ENCODE measurements at regions of chr3 and their contacts with region 1.

Region 1: DNA sequence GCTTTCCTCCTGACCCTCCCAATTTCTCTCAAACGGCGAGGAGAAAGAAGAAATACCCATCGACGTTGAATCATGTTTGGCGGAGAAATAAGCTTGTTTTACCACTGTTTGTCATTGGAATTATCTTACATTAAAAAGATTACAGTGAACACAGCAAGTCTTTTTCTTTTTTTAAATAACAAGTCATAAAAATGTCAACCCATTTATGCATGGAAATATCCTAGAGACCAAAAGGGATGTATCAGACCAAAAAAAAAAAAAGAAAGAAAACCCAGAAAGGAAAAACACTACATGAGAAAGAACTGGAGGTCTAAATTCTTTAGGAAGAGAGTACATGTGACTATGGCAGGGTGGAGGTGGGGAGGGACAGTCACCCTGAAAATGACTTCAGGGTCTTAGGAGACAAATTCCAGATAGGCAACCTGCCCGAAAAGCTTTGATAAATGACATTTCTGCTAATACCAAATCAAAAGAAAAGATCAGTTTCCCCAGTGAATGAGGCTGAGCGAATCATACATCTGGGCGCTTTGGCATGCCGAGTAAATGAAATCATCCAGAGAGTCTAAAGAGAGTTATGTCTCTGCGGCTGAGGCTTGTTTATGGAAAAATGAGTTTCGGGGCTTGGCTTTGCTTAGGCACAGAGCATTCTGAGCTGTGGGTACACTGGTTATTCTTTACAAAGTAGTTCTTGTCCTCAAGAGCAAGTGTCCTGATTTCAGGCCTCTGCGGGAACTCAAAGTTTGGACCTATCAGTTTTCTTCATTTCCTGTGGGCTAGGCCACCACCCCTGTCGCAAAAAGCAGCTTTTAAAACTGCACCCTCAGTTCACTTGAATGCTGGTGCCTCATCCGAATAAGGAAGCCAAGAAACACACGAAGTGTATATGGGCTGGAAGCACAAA is 110.1 kb upstream of the TGFBR2 start:
- DNase-seq: peak in 1 of 2 donors; percentile 61
- ATAC-seq: peak; percentile 83
- H3K4me3 ChIP-seq: no peak overlapping the region
- H3K27ac ChIP-seq: peak overlapping the region; percentile 90 to 91
- H3K4me1 ChIP-seq: peaks cover 3 to 14% of the 10 kb centered on the region in 2 donors
- H3K27me3 ChIP-seq: no peaks in the 10 kb centered on the region

Region 2: GRCh38 chr3:30347679-30348216 is 148.6 kb before region 1 on chr3:
- intact Hi-C with region 1: loop called in 1 of 2 experiments (anchors 10 kb)
- DNase-seq: no peak
- ATAC-seq: no peak
- H3K4me3 ChIP-seq: no peak overlapping the region
- H3K27ac ChIP-seq: no peak overlapping the region
- H3K4me1 ChIP-seq: peaks cover 1 to 14% of the 10 kb centered on the region in 2 donors
- H3K27me3 ChIP-seq: no peaks in the 10 kb centered on the region

Region 3: GRCh38 chr3:30437171-30437601 is 59.1 kb before region 1 on chr3:
- intact Hi-C with region 1: loop called in 1 of 2 experiments (anchors 10 kb)
- DNase-seq: peak in 1 of 2 donors; percentile 45
- ATAC-seq: peak; percentile 73
- H3K4me3 ChIP-seq: no peak overlapping the region
- H3K27ac ChIP-seq: peak overlapping the region; percentile 43 to 88
- H3K4me1 ChIP-seq: peaks cover 8 to 12% of the 10 kb centered on the region in 2 donors
- H3K27me3 ChIP-seq: no peaks in the 10 kb centered on the region

Region 4: GRCh38 chr3:30443756-30444673 is 52.3 kb before region 1 on chr3:
- intact Hi-C with region 1: loop called (anchors 2 to 10 kb)
- DNase-seq: no peak
- ATAC-seq: peak; percentile 74
- H3K4me3 ChIP-seq: no peak overlapping the region
- H3K27ac ChIP-seq: peak overlapping the region; percentile 68 to 93
- H3K4me1 ChIP-seq: peaks cover 10 to 11% of the 10 kb centered on the region in 2 donors
- H3K27me3 ChIP-seq: no peaks in the 10 kb centered on the region

Measured in aorta (tissue), 5 donors.